PC-3 (cell line): ENCODE measurements at regions of chr4 and their contacts with region 1.

Region 1: GRCh38 chr4:119559044-119559647 is 69.5 kb downstream of the PDE5A start:
- DNase-seq: peak; percentile 66
- ATAC-seq: no peak; the same call in 1 of the 2 replicates
- H3K4me3 ChIP-seq: no peak overlapping the region
- H3K27ac ChIP-seq: no peak overlapping the region
- H3K4me1 ChIP-seq: no peaks in the 10 kb centered on the region
- H3K27me3 ChIP-seq: no peaks in the 10 kb centered on the region
- CTCF ChIP-seq: peak; percentile 63

Region 2: DNA sequence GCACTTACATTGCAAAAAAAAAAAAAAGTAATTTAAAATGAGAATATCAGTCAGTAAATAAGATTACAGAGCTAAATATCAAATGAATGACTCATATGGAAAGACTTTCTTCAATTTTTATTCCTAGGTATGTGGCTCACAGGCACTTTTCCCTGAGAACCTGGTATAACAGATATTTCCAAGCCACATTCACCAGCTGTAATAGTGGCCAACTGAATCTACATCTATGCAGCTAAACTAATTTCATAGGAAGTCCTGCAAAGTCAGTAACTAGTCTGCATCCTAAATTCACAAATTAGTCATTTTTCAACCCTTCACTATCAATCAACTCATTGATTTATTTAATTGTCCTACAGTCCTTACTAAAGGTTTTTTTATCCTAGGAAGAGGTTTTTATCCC is 63.9 kb after region 1 on chr4:
- CTCF ChIA-PET with region 1: interaction called, 5 read pairs
- POLR2A ChIA-PET with region 1: no interaction called
- intact Hi-C with region 1: loop called (anchors 1 kb)
- DNase-seq: peak; percentile 48
- ATAC-seq: peak; percentile 16; the same call in 1 of the 2 replicates
- H3K4me3 ChIP-seq: no peak overlapping the region
- H3K27ac ChIP-seq: no peak overlapping the region
- H3K4me1 ChIP-seq: peaks cover 14% of the 10 kb centered on the region; the same call in 1 of the 2 replicates
- H3K27me3 ChIP-seq: no peaks in the 10 kb centered on the region
- CTCF ChIP-seq: no peak

Region 3: DNA sequence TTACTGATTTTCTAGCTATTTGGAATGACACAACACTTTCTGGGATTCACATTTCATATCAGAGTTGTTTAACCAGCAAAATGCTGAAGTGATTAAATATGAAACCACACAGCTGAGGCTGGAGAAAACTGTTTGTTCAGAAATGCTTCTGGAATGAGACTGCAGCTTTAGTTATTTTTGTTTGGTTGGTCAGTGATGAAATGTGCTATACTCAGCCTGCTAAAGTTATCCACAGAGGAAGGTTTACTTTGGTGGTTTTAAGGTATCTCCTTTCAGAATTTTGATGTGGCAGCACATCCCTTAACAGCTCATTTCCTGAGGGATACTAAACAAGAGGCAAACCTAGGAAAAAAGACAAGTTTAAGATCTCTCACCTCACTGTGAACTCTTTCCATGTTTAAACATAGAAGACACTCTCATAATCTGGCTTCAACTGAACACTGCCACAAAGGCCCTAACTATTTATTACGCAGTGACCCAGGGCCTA is 176.1 kb after region 1 on chr4:
- CTCF ChIA-PET with region 1: no interaction called
- POLR2A ChIA-PET with region 1: no interaction called
- intact Hi-C with region 1: loop called (anchors 5 kb)
- DNase-seq: peak; percentile 89
- ATAC-seq: peak; percentile 87
- H3K4me3 ChIP-seq: no peak overlapping the region; the same call in 1 of the 2 replicates
- H3K27ac ChIP-seq: peak overlapping the region; percentile 77
- H3K4me1 ChIP-seq: peaks cover 56% of the 10 kb centered on the region
- H3K27me3 ChIP-seq: no peaks in the 10 kb centered on the region
- CTCF ChIP-seq: no peak

Region 4: GRCh38 chr4:119785963-119786362 is 226.8 kb after region 1 on chr4:
- CTCF ChIA-PET with region 1: no interaction called
- POLR2A ChIA-PET with region 1: no interaction called
- intact Hi-C with region 1: loop called (anchors 1 kb)
- DNase-seq: peak; percentile 44
- ATAC-seq: peak; percentile 29; the same call in 1 of the 2 replicates
- H3K4me3 ChIP-seq: no peak overlapping the region
- H3K27ac ChIP-seq: no peak overlapping the region
- H3K4me1 ChIP-seq: peaks cover 3% of the 10 kb centered on the region; the same call in 1 of the 2 replicates
- H3K27me3 ChIP-seq: no peaks in the 10 kb centered on the region
- CTCF ChIP-seq: peak; percentile 70

Region 5: GRCh38 chr4:120049732-120050494 is 490.8 kb after region 1 on chr4:
- CTCF ChIA-PET with region 1: interaction called, 4 read pairs
- POLR2A ChIA-PET with region 1: no interaction called
- intact Hi-C with region 1: loop called (anchors 2 kb)
- DNase-seq: peak; percentile 80
- ATAC-seq: peak; percentile 98
- H3K4me3 ChIP-seq: peak overlapping the region; percentile 23; the same call in 1 of the 2 replicates
- H3K27ac ChIP-seq: no peak overlapping the region
- H3K4me1 ChIP-seq: no peaks in the 10 kb centered on the region
- H3K27me3 ChIP-seq: no peaks in the 10 kb centered on the region
- CTCF ChIP-seq: peak; percentile 78

Region 6: GRCh38 chr4:120331486-120332370 is 772.6 kb after region 1 on chr4:
- CTCF ChIA-PET with region 1: no interaction called
- POLR2A ChIA-PET with region 1: no interaction called
- intact Hi-C with region 1: no loop called
- DNase-seq: peak; percentile 2
- ATAC-seq: no peak
- H3K4me3 ChIP-seq: no peak overlapping the region
- H3K27ac ChIP-seq: no peak overlapping the region
- H3K4me1 ChIP-seq: no peaks in the 10 kb centered on the region
- H3K27me3 ChIP-seq: no peaks in the 10 kb centered on the region
- CTCF ChIP-seq: no peak